ENCODE measurements at regions of chr11 and their contacts with region 1.

Region 1: GRCh38 chr11:95150946-95151684 is 61.5 kb downstream of the ENDOD1 start:
- DNase-seq: peak; percentile 92
- H3K4me3 ChIP-seq: peak overlapping the region; percentile 9 to 39 (median 34)
- H3K27ac ChIP-seq: peak overlapping the region; percentile 62
- H3K4me1 ChIP-seq: peaks cover 36% of the 10 kb centered on the region
- H3K27me3 ChIP-seq: no peaks in the 10 kb centered on the region
- CTCF ChIP-seq: peak; percentile 73 to 84
- POLR2A ChIP-seq: no peak

Region 2: DNA sequence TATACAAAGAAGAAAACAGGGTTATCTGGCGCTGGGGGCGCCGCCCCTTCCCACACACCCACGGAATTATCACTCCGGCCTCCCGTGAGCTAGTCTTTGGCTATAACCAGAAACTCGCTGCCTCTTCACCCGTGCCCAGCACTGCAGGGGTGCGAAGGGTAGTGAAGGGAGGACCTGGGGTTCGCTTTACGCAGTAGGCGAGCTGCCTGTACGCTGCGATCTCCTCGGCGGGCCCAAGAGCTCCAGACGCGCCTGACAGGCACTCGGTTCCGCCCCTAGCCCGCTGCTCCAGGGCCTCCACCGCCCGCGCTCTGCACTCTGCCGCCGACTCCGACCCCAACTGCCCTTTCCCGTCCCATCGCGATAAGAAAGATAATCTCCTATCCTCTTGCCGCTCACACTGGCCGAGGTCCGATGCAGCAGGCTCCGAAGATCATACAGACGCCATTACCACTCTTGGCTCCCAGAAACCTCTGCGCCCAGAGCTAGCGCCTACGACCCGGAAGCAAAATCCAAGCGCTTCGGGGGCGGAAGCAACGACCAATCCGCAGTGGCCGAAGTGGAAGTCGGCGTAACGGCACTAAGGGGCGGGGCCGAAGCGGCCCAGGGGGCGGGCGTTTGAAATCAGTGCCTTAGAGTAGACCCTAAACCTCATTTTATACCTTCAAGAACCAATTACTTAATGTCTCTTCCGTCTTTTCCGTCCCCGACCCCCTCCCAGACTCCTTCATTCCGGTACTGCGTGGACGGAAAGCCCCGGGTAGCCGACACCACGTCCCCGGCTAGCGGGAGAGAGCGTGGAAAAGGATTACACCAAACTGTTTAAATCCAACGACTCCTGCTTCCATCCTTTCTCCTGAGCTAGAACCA is 177.8 kb before region 1 on chr11 and contains the starts of genes CWC15 and KDM4D:
- CTCF ChIA-PET with region 1: interaction called, 4 read pairs
- POLR2A ChIA-PET with region 1: interaction called, 3 read pairs
- dilution Hi-C with region 1: no loop called
- intact Hi-C with region 1: loop called (anchors 1 kb)
- DNase-seq: peak; percentile 95
- H3K4me3 ChIP-seq: peak within 1 kb of the TSS; percentile 77 to 94 (median 92)
- H3K27ac ChIP-seq: peak within 1 kb of the TSS; percentile 76
- H3K4me1 ChIP-seq: peaks cover 9% of the 10 kb centered on the region
- H3K27me3 ChIP-seq: no peaks in the 10 kb centered on the region
- CTCF ChIP-seq: no peak
- POLR2A ChIP-seq: peak; percentile 91
- total RNA-seq, gene CWC15: 72.0 and 75.6 TPM in 2 replicates
- total RNA-seq, gene KDM4D: 1.0 and 1.3 TPM in 2 replicates

Region 3: DNA sequence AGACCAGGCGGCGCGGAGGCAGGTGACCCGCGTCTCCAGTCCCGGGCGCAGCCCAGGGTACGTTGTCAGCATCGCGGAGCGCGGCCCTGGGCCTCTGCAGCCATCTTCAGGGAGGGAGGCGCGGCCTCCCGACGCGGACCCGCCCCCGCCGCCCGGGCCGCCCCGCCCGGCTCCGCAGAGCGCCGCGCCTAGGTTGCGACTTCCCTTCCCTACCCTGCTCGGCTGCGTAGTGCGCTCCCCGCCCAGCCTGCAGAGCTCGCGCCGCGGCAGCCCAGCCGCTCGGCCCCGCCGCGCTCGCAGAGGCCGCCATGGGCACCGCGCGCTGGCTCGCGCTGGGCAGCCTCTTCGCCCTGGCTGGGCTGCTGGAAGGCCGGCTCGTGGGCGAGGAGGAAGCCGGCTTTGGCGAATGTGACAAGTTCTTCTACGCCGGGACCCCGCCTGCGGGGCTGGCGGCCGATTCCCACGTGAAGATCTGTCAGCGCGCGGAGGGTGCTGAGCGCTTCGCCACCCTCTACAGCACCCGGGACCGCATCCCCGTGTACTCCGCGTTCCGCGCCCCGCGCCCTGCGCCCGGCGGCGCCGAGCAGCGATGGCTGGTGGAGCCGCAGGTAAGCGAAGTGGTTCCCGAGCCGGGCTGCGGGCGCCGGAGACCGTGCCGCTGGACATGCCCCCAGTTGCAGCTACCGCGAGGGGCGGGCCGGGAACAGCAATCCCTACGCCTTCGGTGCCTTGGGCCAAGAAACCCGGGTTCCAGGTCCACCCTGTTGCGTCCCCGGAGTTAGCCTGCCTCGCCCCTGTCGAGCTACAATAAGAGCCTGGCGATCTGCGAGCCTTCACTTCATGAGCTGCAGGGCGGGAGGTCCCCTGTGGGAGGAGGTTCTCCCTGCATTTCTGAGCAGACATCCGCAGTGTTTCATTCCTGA is 61.2 kb before region 1 on chr11 and contains the start of gene ENDOD1:
- CTCF ChIA-PET with region 1: interaction called, 19 read pairs
- POLR2A ChIA-PET with region 1: no interaction called
- dilution Hi-C with region 1: no loop called
- intact Hi-C with region 1: loop called (anchors 1 kb)
- DNase-seq: peak; percentile 87
- H3K4me3 ChIP-seq: peak within 1 kb of the TSS; percentile 31 to 81 (median 67)
- H3K27ac ChIP-seq: peak within 1 kb of the TSS; percentile 39
- H3K4me1 ChIP-seq: peaks cover 10% of the 10 kb centered on the region
- H3K27me3 ChIP-seq: no peaks in the 10 kb centered on the region
- CTCF ChIP-seq: peak in 1 of 2 donors; percentile 5
- POLR2A ChIP-seq: peak; percentile 17
- total RNA-seq, gene ENDOD1: 17.1 and 20.5 TPM in 2 replicates

Region 4: DNA sequence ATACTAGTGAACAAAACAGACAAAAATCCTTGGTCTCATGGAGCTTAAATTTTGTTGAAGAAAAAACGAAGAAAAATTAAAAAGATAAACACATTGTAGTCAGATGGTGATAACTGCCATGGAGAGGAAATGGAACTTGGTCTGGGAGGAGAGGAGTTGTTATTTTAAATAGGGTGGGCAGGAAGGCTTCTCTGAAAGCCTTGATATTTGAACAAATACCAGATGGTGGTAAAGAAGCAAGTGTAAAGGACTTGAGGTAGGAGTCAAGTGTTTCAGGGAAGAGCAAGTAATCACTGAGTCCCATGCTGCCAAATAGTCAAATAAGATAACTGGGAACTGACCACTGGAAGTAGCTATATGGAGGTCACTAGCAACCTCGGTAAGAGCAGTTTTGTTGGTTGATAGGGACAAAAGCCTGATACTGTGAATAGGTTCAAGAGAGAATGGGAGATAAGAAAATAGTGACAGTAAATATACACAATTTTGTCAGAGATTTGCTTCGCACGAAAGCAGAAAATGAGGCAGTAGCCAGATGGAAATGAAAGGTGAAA is 24.8 kb after region 1 on chr11:
- CTCF ChIA-PET with region 1: no interaction called
- POLR2A ChIA-PET with region 1: no interaction called
- dilution Hi-C with region 1: no loop called
- intact Hi-C with region 1: no loop called
- DNase-seq: no peak
- H3K4me3 ChIP-seq: no peak overlapping the region
- H3K27ac ChIP-seq: no peak overlapping the region
- H3K4me1 ChIP-seq: no peaks in the 10 kb centered on the region
- H3K27me3 ChIP-seq: no peaks in the 10 kb centered on the region
- CTCF ChIP-seq: no peak
- POLR2A ChIP-seq: no peak

Region 5: GRCh38 chr11:95231127-95231880 is 80.2 kb after region 1 on chr11 and contains the start of gene SESN3:
- CTCF ChIA-PET with region 1: interaction called, 5 read pairs
- POLR2A ChIA-PET with region 1: interaction called, 8 read pairs
- dilution Hi-C with region 1: no loop called
- intact Hi-C with region 1: loop called (anchors 1 kb)
- DNase-seq: peak; percentile 99
- H3K4me3 ChIP-seq: peak within 1 kb of the TSS; percentile 43 to 65 (median 49)
- H3K27ac ChIP-seq: no peak within 1 kb of the TSS
- H3K4me1 ChIP-seq: peaks cover 11% of the 10 kb centered on the region
- H3K27me3 ChIP-seq: peaks cover 15 to 43% of the 10 kb centered on the region in 2 experiments
- CTCF ChIP-seq: no peak
- POLR2A ChIP-seq: no peak
- total RNA-seq, gene SESN3: 5.6 and 6.9 TPM in 2 replicates

Region 6: GRCh38 chr11:95764267-95764898 is 613.3 kb after region 1 on chr11:
- CTCF ChIA-PET with region 1: interaction called, 22 read pairs
- POLR2A ChIA-PET with region 1: no interaction called
- dilution Hi-C with region 1: no loop called
- intact Hi-C with region 1: loop called (anchors 1 kb)
- DNase-seq: peak; percentile 70
- H3K4me3 ChIP-seq: no peak overlapping the region
- H3K27ac ChIP-seq: no peak overlapping the region
- H3K4me1 ChIP-seq: no peaks in the 10 kb centered on the region
- H3K27me3 ChIP-seq: peaks cover 5 to 6% of the 10 kb centered on the region in 2 experiments
- CTCF ChIP-seq: peak; percentile 33 to 37
- POLR2A ChIP-seq: no peak

Region 7: DNA sequence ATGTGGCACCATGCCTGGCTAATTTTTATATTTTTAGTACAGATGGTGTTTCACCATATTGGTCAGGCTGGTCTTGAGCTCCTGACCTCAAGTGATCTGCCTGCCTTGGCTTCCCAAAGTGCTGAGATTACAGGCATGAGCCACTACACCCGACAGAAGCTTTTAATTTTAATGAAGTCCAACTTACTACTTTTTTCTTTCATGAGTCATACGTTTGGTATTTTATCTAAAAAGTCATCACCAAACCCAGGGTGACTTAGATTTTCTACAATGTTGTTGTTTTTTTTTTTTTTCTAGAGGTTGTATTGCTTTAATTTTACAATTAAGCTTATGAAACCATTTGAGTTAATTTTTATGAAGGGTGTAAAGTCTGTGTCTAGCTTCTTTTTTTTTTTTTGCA is 1273.6 kb after region 1 on chr11:
- CTCF ChIA-PET with region 1: interaction called, 11 read pairs
- POLR2A ChIA-PET with region 1: no interaction called
- dilution Hi-C with region 1: no loop called
- intact Hi-C with region 1: loop called (anchors 1 kb)
- DNase-seq: peak; percentile 51
- H3K4me3 ChIP-seq: no peak overlapping the region
- H3K27ac ChIP-seq: no peak overlapping the region
- H3K4me1 ChIP-seq: peaks cover 2% of the 10 kb centered on the region
- H3K27me3 ChIP-seq: peaks cover 0 to 17% of the 10 kb centered on the region in 2 experiments
- CTCF ChIP-seq: no peak
- POLR2A ChIP-seq: no peak